Panc1 (cell line): ENCODE measurements at regions of chr3 and their contacts with region 1.

Region 1: GRCh38 chr3:151075869-151076562 is 9.4 kb upstream of the MED12L start:
- DNase-seq: no peak
- ATAC-seq: no peak
- H3K4me3 ChIP-seq: no peak overlapping the region
- H3K27ac ChIP-seq: no peak overlapping the region
- H3K4me1 ChIP-seq: no peaks in the 10 kb centered on the region
- H3K27me3 ChIP-seq: peaks cover 31% of the 10 kb centered on the region
- CTCF ChIP-seq: no peak

Region 2: GRCh38 chr3:150613709-150614480 is 462.1 kb before region 1 on chr3:
- CTCF ChIA-PET with region 1: no interaction called
- POLR2A ChIA-PET with region 1: interaction called, 14 read pairs
- in situ Hi-C with region 1: no loop called
- intact Hi-C with region 1: no loop called
- DNase-seq: no peak
- ATAC-seq: no peak
- H3K4me3 ChIP-seq: no peak overlapping the region
- H3K27ac ChIP-seq: no peak overlapping the region
- H3K4me1 ChIP-seq: no peaks in the 10 kb centered on the region; the same call in 1 of the 2 replicates
- H3K27me3 ChIP-seq: no peaks in the 10 kb centered on the region
- CTCF ChIP-seq: no peak

Region 3: DNA sequence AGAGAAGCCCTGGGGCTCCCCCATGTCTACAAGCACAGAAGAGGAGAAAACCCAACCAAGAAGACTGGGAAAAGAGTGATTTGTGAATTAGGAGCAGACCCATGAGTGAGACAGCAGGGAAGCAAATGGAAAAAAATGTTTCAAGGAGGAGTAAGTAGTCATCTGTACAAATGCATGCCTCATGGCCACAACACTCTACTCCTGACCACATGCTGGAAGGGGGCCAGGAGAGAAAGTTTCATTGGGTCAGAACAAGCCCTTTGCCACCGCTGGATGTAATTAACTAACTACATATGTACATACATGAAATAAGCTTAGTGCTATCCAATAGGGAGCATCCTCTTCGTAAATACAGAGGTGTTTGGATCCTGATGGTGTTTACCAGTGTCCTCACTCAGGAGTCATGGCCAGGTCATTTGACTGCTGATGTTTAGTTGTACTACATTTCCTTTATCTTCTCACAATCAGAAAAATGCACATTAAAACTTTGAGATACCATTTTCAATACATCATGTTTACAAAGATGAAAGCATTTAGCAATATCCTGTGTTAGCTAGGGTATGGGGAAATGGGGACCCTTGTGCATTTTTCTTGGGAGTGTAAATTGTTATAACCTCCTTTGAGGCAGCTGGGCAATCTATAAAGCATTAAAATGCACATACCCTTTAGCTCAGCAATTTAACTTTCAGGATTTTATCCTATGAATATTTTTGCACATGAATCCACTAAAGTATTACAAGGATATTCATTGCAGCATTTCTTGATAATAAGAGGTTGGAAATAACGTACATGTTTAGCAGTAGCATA is 130.6 kb before region 1 on chr3:
- CTCF ChIA-PET with region 1: no interaction called
- POLR2A ChIA-PET with region 1: no interaction called
- in situ Hi-C with region 1: no loop called
- intact Hi-C with region 1: no loop called
- DNase-seq: no peak
- ATAC-seq: no peak
- H3K4me3 ChIP-seq: no peak overlapping the region
- H3K27ac ChIP-seq: no peak overlapping the region
- H3K4me1 ChIP-seq: no peaks in the 10 kb centered on the region
- H3K27me3 ChIP-seq: peaks cover 17% of the 10 kb centered on the region
- CTCF ChIP-seq: no peak

Region 4: DNA sequence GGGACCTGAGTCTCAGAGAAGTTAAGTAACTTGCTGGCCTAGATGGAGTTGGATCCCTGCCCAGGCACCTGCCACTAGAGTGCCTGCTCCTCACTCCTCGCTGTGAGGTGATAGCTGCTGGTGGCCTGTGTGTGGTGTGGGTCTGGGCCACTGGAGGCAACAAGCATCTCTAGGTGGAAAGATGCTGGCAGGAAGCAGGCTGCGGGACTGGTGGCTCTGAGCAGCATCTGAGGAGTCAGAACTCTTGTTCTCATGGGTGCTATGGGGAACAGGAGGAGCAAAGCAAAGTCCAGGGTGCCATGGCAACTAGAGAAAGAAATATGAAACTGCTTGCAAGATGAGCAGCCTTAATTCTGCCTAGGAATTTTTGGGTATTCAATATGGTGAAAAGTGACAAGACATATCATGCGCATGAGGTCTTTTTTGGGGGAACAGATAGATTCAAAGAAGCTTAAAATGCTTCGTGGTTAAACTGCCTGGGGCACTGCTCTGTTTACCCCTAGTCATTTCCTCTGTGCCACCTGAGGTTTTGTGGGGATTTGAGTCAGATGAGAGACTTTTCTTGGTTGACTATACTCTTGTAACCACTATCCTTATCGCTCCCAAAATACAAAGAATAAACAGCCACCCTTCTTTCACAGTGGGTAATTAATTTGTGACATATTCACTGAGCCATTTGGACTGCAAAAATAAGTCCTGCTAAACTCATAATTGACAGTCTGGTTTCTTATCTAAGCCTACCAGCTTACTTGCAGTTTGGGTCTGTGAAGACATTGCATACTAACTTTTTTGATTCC is 59.7 kb after region 1 on chr3:
- CTCF ChIA-PET with region 1: no interaction called
- POLR2A ChIA-PET with region 1: no interaction called
- in situ Hi-C with region 1: no loop called
- intact Hi-C with region 1: no loop called
- DNase-seq: no peak
- ATAC-seq: no peak; the same call in 1 of the 2 replicates
- H3K4me3 ChIP-seq: no peak overlapping the region
- H3K27ac ChIP-seq: no peak overlapping the region
- H3K4me1 ChIP-seq: no peaks in the 10 kb centered on the region
- H3K27me3 ChIP-seq: peaks cover 5% of the 10 kb centered on the region; the same call in 1 of the 2 replicates
- CTCF ChIP-seq: no peak